ENCODE measurements at regions of chr19 and their contacts with region 1.

Region 1: GRCh38 chr19:5827891-5828660 is 11.4 kb downstream of the FUT6 start:
- DNase-seq: peak; percentile 99
- ATAC-seq: peak; percentile 85
- H3K4me3 Mint-ChIP-seq: peak overlapping the region; percentile 99
- H3K27ac Mint-ChIP-seq: peak overlapping the region; percentile 100
- H3K4me1 Mint-ChIP-seq: peaks cover 5% of the 10 kb centered on the region
- H3K27me3 Mint-ChIP-seq: peaks cover 2% of the 10 kb centered on the region

Region 2: GRCh38 chr19:5631568-5632240 is 196.4 kb before region 1 on chr19:
- POLR2A ChIA-PET with region 1: no interaction called
- DNase-seq: no peak
- ATAC-seq: no peak
- H3K4me3 Mint-ChIP-seq: no peak overlapping the region
- H3K27ac Mint-ChIP-seq: no peak overlapping the region
- H3K4me1 Mint-ChIP-seq: peaks cover 48% of the 10 kb centered on the region
- H3K27me3 Mint-ChIP-seq: no peaks in the 10 kb centered on the region

Region 3: GRCh38 chr19:5790573-5791520 is 37.2 kb before region 1 on chr19 and contains the start of gene DUS3L:
- POLR2A ChIA-PET with region 1: interaction called, 10 read pairs
- DNase-seq: peak; percentile 96
- ATAC-seq: peak; percentile 97
- H3K4me3 Mint-ChIP-seq: peak within 1 kb of the TSS; percentile 94
- H3K27ac Mint-ChIP-seq: peak within 1 kb of the TSS; percentile 100
- H3K4me1 Mint-ChIP-seq: peaks cover 5% of the 10 kb centered on the region
- H3K27me3 Mint-ChIP-seq: no peaks in the 10 kb centered on the region
- total RNA-seq, gene DUS3L: 61.0 to 62.1 TPM

Region 4: DNA sequence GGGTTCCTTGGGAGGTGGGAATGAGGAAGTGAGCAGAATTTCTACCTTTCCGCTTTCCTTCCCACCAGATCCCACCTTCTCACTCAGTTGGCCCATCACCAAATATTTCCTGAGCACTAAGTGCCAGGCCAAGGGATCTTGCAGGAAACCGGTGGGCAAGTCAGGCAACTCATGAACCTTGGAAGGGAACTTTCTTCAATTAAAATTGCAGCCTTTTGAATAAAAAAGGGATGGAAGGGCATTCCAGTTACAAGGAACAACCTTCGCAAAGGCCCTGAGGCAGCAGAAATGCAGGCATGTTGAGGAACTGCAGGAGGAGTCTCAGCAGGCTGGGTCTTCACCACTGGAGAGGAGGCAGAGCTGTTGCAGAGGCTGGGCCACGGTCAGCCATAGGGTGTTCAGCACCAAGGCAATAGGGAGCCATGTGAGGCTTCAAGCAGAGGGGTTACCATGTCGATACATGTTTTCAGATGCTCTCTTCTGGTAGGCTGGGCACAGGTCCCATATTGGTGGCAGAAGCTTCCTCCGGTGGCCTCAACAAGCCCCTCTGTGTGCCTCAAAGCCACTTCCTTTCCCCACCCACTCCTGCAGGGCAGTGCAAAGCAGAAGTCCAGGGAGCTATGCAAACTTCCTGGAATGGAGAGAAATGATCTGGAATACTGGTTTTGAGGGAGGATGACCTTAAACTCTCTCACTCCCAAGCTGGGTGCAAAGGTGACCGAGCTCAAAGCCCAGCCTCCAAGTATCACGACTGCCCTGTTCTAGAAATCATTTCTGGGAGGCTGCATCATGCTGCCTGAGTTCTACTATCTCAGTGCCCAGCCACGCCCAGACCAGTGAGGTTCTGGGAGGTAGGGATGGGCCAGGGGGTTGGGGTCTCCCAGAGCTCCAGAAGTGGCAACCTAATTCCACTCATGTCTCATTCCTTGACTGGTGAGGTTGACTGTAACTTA is 11.3 kb after region 1 on chr19 and contains the start of gene FUT6:
- POLR2A ChIA-PET with region 1: interaction called, 18 read pairs
- DNase-seq: no peak
- ATAC-seq: peak; percentile 21
- H3K4me3 Mint-ChIP-seq: peak within 1 kb of the TSS; percentile 47
- H3K27ac Mint-ChIP-seq: peak within 1 kb of the TSS; percentile 72
- H3K4me1 Mint-ChIP-seq: peaks cover 18% of the 10 kb centered on the region
- H3K27me3 Mint-ChIP-seq: peaks cover 6% of the 10 kb centered on the region
- total RNA-seq, gene FUT6: 0.75 to 0.91 TPM

Region 5: DNA sequence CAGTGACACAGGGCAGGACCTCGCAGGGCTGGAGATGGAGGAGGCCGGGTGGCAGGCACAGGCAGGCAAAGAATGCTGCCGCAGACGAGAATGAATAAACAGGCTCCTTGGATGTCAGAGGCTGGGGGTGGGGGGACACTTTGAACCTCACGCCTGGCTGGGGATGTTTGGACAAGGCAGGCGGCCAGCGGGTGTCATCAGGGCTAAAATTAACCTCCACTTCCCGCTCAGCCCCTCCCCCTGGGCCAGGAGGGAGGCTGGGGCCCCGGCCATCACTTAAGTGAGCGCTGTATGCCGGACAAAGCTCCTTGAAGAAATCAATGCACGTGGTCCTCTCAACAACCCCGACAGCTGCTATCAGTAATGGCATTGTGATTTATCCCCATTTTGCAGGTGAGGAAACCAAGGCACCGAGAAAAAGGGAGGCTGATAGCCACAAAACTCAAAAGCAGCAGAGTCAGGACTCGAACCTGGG is 52.6 kb after region 1 on chr19:
- POLR2A ChIA-PET with region 1: no interaction called
- DNase-seq: no peak
- ATAC-seq: no peak
- H3K4me3 Mint-ChIP-seq: no peak overlapping the region
- H3K27ac Mint-ChIP-seq: no peak overlapping the region
- H3K4me1 Mint-ChIP-seq: no peaks in the 10 kb centered on the region
- H3K27me3 Mint-ChIP-seq: peaks cover 15% of the 10 kb centered on the region

Region 6: DNA sequence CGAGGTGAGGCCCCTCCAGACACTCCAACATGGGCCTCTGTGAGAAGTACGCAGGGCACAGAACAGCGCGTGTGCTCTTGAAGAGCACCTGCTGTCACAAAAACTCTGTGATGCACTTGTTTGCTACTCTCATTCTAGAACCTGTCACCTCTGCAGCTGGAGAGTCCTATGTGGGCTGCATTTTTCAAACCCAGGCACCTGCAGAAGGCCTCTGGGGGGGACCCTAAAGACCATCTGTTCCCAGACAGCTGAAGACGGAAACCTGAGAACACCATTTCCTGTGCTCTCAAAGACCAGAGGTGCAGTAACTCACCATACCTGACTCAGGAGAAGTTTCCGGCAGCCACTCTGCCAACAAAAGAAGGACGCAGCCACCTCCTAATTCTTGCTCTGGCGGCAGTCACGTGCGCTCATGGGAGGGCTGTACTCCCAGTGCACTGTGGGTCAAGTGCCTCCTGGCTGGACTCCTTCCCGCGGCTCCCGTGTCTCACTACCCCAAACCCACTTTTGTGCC is 121.8 kb after region 1 on chr19:
- POLR2A ChIA-PET with region 1: interaction called, 11 read pairs
- DNase-seq: peak; percentile 57
- ATAC-seq: peak; percentile 64
- H3K4me3 Mint-ChIP-seq: peak overlapping the region; percentile 56
- H3K27ac Mint-ChIP-seq: peak overlapping the region; percentile 84
- H3K4me1 Mint-ChIP-seq: peaks cover 67% of the 10 kb centered on the region
- H3K27me3 Mint-ChIP-seq: no peaks in the 10 kb centered on the region

Region 7: DNA sequence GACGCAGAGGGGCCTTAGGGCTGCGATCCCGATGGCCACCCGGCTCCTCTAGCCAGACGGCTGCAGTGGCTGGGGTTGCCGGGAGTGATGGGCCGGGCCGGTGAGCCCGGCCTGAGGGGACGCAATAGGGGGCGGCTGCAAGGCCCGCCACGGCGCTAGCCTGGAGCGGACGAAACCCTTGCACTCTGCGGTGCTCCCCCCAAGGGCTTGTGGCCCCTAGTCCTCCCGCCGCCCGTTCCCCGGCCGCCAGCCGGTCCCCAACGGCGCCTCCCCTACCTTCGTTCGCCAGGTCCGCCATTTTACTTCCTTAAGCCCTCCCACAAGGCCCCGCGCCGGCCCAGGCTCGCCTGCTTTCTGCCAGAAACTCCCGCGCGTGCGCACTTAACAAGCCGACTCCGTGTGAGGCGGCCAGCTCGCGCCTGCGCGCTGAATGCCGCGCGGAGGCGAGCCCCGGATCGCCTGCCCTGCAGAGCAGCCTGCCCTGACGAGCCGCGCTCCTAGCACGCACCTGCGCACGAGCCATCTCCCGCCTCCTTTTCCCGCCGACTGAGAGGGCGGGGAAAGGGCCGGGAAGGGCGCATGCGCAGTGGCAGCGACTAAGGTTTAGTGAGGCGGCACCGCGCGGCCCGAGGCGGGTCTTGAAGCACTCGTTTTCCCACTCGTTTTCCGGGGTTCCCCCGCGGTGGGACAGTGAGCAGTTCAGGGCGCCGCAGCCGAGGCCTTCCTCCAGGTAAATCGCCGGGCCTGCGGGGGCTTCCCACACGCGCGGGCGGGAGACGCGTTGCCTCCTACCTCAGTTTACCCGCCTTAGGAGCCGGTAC is 149.9 kb after region 1 on chr19 and contains the start of gene RANBP3:
- POLR2A ChIA-PET with region 1: interaction called, 10 read pairs
- DNase-seq: peak; percentile 98
- ATAC-seq: peak; percentile 98
- H3K4me3 Mint-ChIP-seq: peak within 1 kb of the TSS; percentile 98
- H3K27ac Mint-ChIP-seq: peak within 1 kb of the TSS; percentile 95
- H3K4me1 Mint-ChIP-seq: peaks cover 49% of the 10 kb centered on the region
- H3K27me3 Mint-ChIP-seq: no peaks in the 10 kb centered on the region
- total RNA-seq, gene RANBP3: 104 to 108 TPM

Measured in activated naive CD8-positive, alpha-beta T cell treated with anti-CD3 and anti-CD28 coated beads, Interleukin-2, amount 10 ng/mL, durations not matched to agents 7 days and 5 days (primary cell).